SK-N-SH (cell line): ENCODE measurements at regions of chr11 and their contacts with region 1.

Region 1: GRCh38 chr11:44893846-44894617 is 56.7 kb downstream of the TP53I11 start:
- DNase-seq: peak; percentile 86
- H3K4me3 ChIP-seq: peak overlapping the region in 1 of 2 experiments; percentile 46; a peak in 1 of 4 replicates
- H3K27ac ChIP-seq: peak overlapping the region in 1 of 2 experiments; percentile 64; a peak in 2 of 4 replicates
- H3K4me1 ChIP-seq: peaks cover 0 to 35% of the 10 kb centered on the region in 2 experiments; a peak in 1 of 4 replicates
- H3K27me3 ChIP-seq: no peaks in the 10 kb centered on the region; the same call in 1 of the 2 replicates
- CTCF ChIP-seq: peak; percentile 91
- EP300 ChIP-seq: no peak
- RAD21 ChIP-seq: peak; percentile 94

Region 2: GRCh38 chr11:44634401-44635281 is 259.4 kb before region 1 on chr11:
- CTCF ChIA-PET with region 1: interaction called, 30 read pairs
- POLR2A ChIA-PET with region 1: no interaction called
- DNase-seq: peak; percentile 90
- H3K4me3 ChIP-seq: peak overlapping the region; percentile 1 to 10; a peak in 1 of 4 replicates
- H3K27ac ChIP-seq: peak overlapping the region in 1 of 2 experiments; percentile 80; a peak in 2 of 4 replicates
- H3K4me1 ChIP-seq: peaks cover 5 to 20% of the 10 kb centered on the region in 2 experiments; a peak in 2 of 4 replicates
- H3K27me3 ChIP-seq: peaks cover 3% of the 10 kb centered on the region; the same call in 1 of the 2 replicates
- CTCF ChIP-seq: no peak
- EP300 ChIP-seq: no peak; a peak in 1 of 4 replicates
- RAD21 ChIP-seq: no peak; the same call in 1 of the 2 replicates

Region 3: GRCh38 chr11:44727373-44728287 is 166.4 kb before region 1 on chr11:
- CTCF ChIA-PET with region 1: interaction called, 12 read pairs
- POLR2A ChIA-PET with region 1: no interaction called
- DNase-seq: peak; percentile 92
- H3K4me3 ChIP-seq: peak overlapping the region; percentile 61 to 62
- H3K27ac ChIP-seq: peak overlapping the region in 1 of 2 experiments; percentile 92; a peak in 2 of 4 replicates
- H3K4me1 ChIP-seq: peaks cover 5 to 56% of the 10 kb centered on the region in 2 experiments; a peak in 3 of 4 replicates
- H3K27me3 ChIP-seq: peaks cover 25% of the 10 kb centered on the region; the same call in 1 of the 2 replicates
- CTCF ChIP-seq: peak; percentile 80
- EP300 ChIP-seq: no peak
- RAD21 ChIP-seq: peak; percentile 85

Region 4: GRCh38 chr11:44840526-44841251 is 53.3 kb before region 1 on chr11:
- CTCF ChIA-PET with region 1: interaction called, 14 read pairs
- POLR2A ChIA-PET with region 1: no interaction called
- DNase-seq: peak; percentile 49
- H3K4me3 ChIP-seq: no peak overlapping the region
- H3K27ac ChIP-seq: peak overlapping the region in 1 of 2 experiments; percentile 97; a peak in 2 of 4 replicates
- H3K4me1 ChIP-seq: peaks cover 14 to 29% of the 10 kb centered on the region in 2 experiments; a peak in 3 of 4 replicates
- H3K27me3 ChIP-seq: no peaks in the 10 kb centered on the region
- CTCF ChIP-seq: no peak; the same call in 1 of the 2 replicates
- EP300 ChIP-seq: peak in 1 of 2 experiments; percentile 58; a peak in 1 of 4 replicates
- RAD21 ChIP-seq: peak; percentile 50

Region 5: GRCh38 chr11:44905131-44905866 is 11.3 kb after region 1 on chr11:
- CTCF ChIA-PET with region 1: interaction called, 45 read pairs
- POLR2A ChIA-PET with region 1: no interaction called
- DNase-seq: no peak
- H3K4me3 ChIP-seq: no peak overlapping the region
- H3K27ac ChIP-seq: no peak overlapping the region
- H3K4me1 ChIP-seq: peaks cover 0 to 8% of the 10 kb centered on the region in 2 experiments; a peak in 1 of 4 replicates
- H3K27me3 ChIP-seq: peaks cover 5% of the 10 kb centered on the region; the same call in 1 of the 2 replicates
- CTCF ChIP-seq: no peak
- EP300 ChIP-seq: no peak
- RAD21 ChIP-seq: no peak

Region 6: DNA sequence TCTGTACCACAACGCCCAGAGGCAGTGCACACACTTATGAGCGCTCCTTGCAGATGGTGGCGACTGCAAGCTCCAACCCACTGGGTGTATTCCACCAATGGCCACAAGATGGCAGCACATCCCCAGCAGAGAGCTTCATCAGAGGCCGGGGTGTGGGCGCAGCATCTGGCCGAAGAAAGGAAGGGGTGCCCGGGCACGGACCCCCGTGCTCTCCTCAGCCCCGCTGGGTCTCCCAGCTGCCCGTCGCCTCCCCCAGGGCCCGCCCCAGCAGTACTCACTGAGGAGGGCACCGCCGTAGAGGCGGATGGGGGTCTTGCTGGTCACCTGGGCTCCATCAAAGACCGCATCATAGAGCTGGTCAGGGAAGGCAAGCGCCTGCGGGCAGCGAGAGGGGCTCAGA is 42.5 kb after region 1 on chr11:
- CTCF ChIA-PET with region 1: no interaction called
- POLR2A ChIA-PET with region 1: no interaction called
- DNase-seq: peak; percentile 91
- H3K4me3 ChIP-seq: peak overlapping the region in 1 of 2 experiments; percentile 44; a peak in 1 of 4 replicates
- H3K27ac ChIP-seq: no peak overlapping the region
- H3K4me1 ChIP-seq: peaks cover 0 to 6% of the 10 kb centered on the region in 2 experiments; a peak in 1 of 4 replicates
- H3K27me3 ChIP-seq: no peaks in the 10 kb centered on the region
- CTCF ChIP-seq: peak; percentile 89
- EP300 ChIP-seq: no peak
- RAD21 ChIP-seq: peak; percentile 95